ENCODE measurements at regions of chr1 and their contacts with region 1.

Region 1: GRCh38 chr1:48572646-48573261 is 100.8 kb upstream of the SPATA6 start:
- DNase-seq: peak in 1 of 2 donors; percentile 61
- ATAC-seq: peak; percentile 40
- H3K4me3 ChIP-seq: no peak overlapping the region
- H3K27ac ChIP-seq: no peak overlapping the region
- H3K4me1 ChIP-seq: no peaks in the 10 kb centered on the region
- H3K27me3 ChIP-seq: no peaks in the 10 kb centered on the region

Region 2: DNA sequence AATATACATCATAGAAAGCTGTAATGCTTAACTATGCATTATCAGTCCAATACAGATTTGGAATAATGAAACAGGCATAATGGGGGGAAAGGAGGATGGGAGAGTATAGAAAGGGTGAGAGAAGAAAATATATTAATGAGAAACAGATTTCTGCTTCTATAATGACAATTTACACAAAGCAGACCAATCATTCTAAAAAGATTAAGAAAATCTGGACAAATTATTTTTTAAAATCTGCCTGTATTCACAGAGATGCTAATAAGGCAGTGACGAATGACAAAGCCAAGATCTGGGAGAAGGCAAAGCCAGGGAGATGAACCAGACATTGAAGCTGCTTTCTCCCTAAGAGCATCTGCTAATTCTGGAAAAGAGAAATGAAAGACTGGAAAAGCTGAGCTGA is 150.7 kb before region 1 on chr1:
- intact Hi-C with region 1: no loop called
- DNase-seq: no peak
- ATAC-seq: no peak
- H3K4me3 ChIP-seq: no peak overlapping the region
- H3K27ac ChIP-seq: no peak overlapping the region
- H3K4me1 ChIP-seq: no peaks in the 10 kb centered on the region
- H3K27me3 ChIP-seq: no peaks in the 10 kb centered on the region

Region 3: GRCh38 chr1:48697066-48697707 is 124.4 kb after region 1 on chr1:
- intact Hi-C with region 1: loop called (anchors 5 kb)
- DNase-seq: peak; percentile 60 to 87
- ATAC-seq: no peak
- H3K4me3 ChIP-seq: no peak overlapping the region
- H3K27ac ChIP-seq: no peak overlapping the region
- H3K4me1 ChIP-seq: no peaks in the 10 kb centered on the region
- H3K27me3 ChIP-seq: no peaks in the 10 kb centered on the region

Region 4: GRCh38 chr1:48817505-48818114 is 244.9 kb after region 1 on chr1:
- intact Hi-C with region 1: loop called (anchors 5 to 10 kb)
- DNase-seq: peak; percentile 72 to 86
- ATAC-seq: peak; percentile 75
- H3K4me3 ChIP-seq: no peak overlapping the region
- H3K27ac ChIP-seq: no peak overlapping the region
- H3K4me1 ChIP-seq: no peaks in the 10 kb centered on the region
- H3K27me3 ChIP-seq: no peaks in the 10 kb centered on the region

Measured in aorta (tissue), 5 donors.